ENCODE measurements at regions of chr15 and their contacts with region 1.

Region 1: DNA sequence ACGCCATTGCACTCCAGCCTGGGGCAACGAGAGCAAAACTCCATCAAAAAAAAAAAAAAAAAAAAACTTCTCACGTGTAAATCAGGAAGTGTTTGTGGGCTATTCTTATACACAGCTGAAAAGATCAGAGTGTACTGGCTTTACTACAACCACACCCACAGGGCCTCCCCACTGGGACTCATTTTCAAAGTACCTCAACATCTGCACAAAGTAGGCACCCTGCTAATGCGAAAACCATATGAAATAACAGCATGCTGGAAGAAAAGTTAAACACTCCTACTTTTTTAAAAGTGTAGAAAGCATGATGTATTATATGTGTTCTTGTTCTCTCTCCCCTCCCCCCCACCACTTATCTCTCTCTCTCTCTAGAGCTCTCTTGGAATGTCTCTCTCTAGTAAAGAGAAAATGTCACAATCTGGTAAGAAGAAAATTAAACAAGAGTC is 11.1 kb downstream of the UACA start:
- DNase-seq: no peak
- ATAC-seq: no peak; the same call in 1 of the 2 replicates
- H3K4me3 ChIP-seq: no peak overlapping the region
- H3K27ac ChIP-seq: no peak overlapping the region
- H3K4me1 ChIP-seq: peaks cover 6% of the 10 kb centered on the region
- H3K27me3 ChIP-seq: no peaks in the 10 kb centered on the region
- CTCF ChIP-seq: no peak
- POLR2A ChIP-seq: no peak
- RAD21 ChIP-seq: no peak

Region 2: DNA sequence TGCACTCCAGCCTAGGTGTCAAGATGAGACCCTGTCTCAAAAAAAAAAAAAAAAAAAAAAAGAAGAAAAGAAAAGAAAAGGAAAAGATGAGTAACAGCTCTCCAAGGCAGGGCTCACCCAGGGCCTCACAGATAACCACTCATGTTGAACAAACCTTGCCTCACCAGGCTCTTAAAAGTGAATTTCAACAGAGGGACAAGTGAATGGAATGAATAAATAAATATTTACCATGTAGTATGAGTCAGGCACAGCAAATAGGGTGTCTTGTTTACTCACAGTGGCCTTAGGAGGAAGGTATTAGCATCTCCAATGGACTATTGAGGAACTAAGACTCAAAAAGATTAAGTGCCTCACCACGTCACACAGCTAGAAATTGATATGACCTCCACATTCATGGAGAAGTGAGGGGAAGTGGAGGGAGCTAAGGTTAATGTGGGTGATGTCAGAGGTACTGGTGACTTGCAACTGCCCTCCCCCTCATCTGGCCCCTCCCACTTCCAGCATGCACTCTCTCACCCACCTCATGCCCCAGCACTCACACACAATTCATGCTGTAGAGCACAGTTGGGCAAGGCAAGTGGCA is 244.4 kb before region 1 on chr15:
- CTCF ChIA-PET with region 1: no interaction called
- POLR2A ChIA-PET with region 1: interaction called, 14 read pairs
- dilution Hi-C with region 1: no loop called
- in situ Hi-C with region 1: no loop called
- intact Hi-C with region 1: no loop called
- DNase-seq: peak; percentile 38
- ATAC-seq: peak; percentile 10
- H3K4me3 ChIP-seq: no peak overlapping the region
- H3K27ac ChIP-seq: no peak overlapping the region
- H3K4me1 ChIP-seq: peaks cover 27% of the 10 kb centered on the region
- H3K27me3 ChIP-seq: peaks cover 4% of the 10 kb centered on the region; the same call in 1 of the 2 replicates
- CTCF ChIP-seq: no peak
- POLR2A ChIP-seq: no peak
- RAD21 ChIP-seq: no peak

Measured in IMR-90 (cell line).